ENCODE measurements at regions of chr19 and their contacts with region 1.

Region 1: GRCh38 chr19:2950286-2951124 is 5.7 kb upstream of the ZNF77 start:
- DNase-seq: peak; percentile 100
- H3K4me3 ChIP-seq: peak overlapping the region; percentile 91
- H3K27ac ChIP-seq: peak overlapping the region; percentile 83 to 94
- H3K4me1 ChIP-seq: peaks cover 3% of the 10 kb centered on the region
- H3K27me3 ChIP-seq: no peaks in the 10 kb centered on the region
- CTCF ChIP-seq: peak in 2 of 3 donors; percentile 10 to 21
- EP300 ChIP-seq: peak; percentile 18
- POLR2A ChIP-seq: peak; percentile 96

Region 2: GRCh38 chr19:3075895-3076431 is 125.5 kb after region 1 on chr19:
- intact Hi-C with region 1: loop called in 2 of 4 experiments (anchors 10 kb)
- DNase-seq: peak in 4 of 5 donors; percentile 68 to 80 (median 74)
- H3K4me3 ChIP-seq: no peak overlapping the region
- H3K27ac ChIP-seq: no peak overlapping the region
- H3K4me1 ChIP-seq: no peaks in the 10 kb centered on the region
- H3K27me3 ChIP-seq: no peaks in the 10 kb centered on the region
- CTCF ChIP-seq: peak; percentile 82 to 92 (median 86)
- EP300 ChIP-seq: no peak
- POLR2A ChIP-seq: no peak

Region 3: DNA sequence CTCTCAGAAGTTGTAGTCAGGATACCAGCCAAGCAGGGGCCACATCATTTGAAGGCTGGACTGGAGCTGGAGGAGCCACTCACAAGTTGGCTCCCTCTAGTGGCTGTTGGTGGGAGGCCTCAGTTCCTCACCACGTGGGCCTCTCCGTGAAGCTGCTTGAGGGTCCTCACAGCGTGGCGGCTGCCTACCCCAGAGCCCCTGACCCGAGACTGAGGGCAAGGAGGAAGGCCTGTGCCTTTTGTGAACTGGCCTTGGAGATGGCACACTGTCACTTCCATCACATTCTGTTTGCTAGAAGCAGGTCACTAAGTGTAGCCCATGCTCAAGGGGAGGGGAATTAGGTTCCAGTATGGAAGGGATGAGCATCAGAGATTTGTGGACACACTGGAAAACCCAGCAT is 158.3 kb after region 1 on chr19:
- intact Hi-C with region 1: loop called in 2 of 4 experiments (anchors 10 kb)
- DNase-seq: peak in 3 of 5 donors; percentile 60 to 69 (median 63)
- H3K4me3 ChIP-seq: no peak overlapping the region
- H3K27ac ChIP-seq: no peak overlapping the region
- H3K4me1 ChIP-seq: peaks cover 9% of the 10 kb centered on the region
- H3K27me3 ChIP-seq: no peaks in the 10 kb centered on the region
- CTCF ChIP-seq: peak; percentile 38 to 46 (median 40)
- EP300 ChIP-seq: no peak
- POLR2A ChIP-seq: no peak

Region 4: DNA sequence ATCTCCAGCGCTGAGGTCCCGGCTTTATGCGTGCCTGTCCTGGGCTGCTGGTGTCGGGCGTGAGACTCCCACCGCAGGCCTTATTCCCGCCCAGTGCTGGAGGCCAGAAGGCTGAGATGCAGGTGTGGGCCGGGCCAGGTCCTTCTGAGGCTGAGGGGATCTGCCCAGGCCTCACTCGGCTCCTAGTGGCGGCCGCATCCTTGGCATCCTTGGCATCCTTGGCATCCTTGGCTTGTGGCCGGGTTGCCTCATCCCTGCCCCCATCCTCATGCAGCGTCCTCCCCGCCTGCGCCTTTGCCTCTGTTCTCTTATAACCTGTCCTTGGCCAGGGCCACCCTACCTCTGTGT is 165.7 kb after region 1 on chr19:
- intact Hi-C with region 1: loop called in 1 of 4 experiments (anchors 10 kb)
- DNase-seq: no peak
- H3K4me3 ChIP-seq: no peak overlapping the region
- H3K27ac ChIP-seq: no peak overlapping the region
- H3K4me1 ChIP-seq: no peaks in the 10 kb centered on the region
- H3K27me3 ChIP-seq: no peaks in the 10 kb centered on the region
- CTCF ChIP-seq: no peak
- EP300 ChIP-seq: no peak
- POLR2A ChIP-seq: no peak

Region 5: DNA sequence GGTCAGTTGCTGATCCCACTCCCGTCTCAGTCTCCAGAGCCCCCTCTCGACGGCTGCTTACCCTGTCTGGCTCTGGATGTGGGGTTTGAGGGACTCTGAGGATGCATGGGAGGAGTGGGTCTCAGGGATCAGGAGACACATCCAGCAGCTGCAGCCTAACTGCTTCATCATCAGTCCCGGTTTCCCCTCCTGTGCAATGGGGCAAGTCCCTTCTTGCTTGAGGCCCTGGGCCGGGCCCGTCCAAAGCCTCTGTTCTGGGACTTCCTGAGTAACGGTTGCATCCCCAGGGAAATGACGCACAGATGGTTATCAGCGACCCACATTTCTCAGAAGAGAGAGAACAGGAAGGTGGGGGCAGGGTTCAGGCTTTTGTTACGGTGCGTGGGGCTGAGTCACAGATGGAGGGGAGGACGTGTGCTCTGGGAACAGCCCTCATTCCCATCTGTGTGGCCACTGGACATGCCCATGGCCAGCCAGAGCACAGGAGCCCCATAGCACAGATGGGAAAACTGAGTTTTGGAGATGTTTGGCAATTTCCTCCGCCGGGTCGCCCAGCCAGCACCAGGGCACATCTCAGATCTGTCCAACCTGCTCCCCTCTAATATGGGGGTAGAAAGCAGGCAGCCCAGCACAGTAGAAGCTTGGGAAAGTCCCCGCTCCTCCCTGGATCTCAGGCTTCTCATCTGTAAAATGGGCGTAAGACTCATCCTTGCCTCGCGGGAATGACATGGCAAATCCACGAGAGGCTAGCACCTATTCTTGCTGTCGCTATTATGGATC is 204.6 kb after region 1 on chr19:
- intact Hi-C with region 1: loop called in 3 of 4 experiments (anchors 5 to 10 kb)
- DNase-seq: peak in 1 of 5 donors; percentile 44
- H3K4me3 ChIP-seq: no peak overlapping the region
- H3K27ac ChIP-seq: no peak overlapping the region
- H3K4me1 ChIP-seq: no peaks in the 10 kb centered on the region
- H3K27me3 ChIP-seq: no peaks in the 10 kb centered on the region
- CTCF ChIP-seq: no peak
- EP300 ChIP-seq: no peak
- POLR2A ChIP-seq: no peak